Common myeloid progenitor, CD34-positive (primary cell): ENCODE measurements at regions of chr5 and their contacts with region 1.

Region 1: GRCh38 chr5:149442563-149443182 is 63.6 kb upstream of the IL17B start:
- DNase-seq: peak; percentile 44 to 66 (median 49)
- H3K4me3 ChIP-seq: no peak overlapping the region
- H3K27ac ChIP-seq: no peak overlapping the region
- H3K4me1 ChIP-seq: peaks cover 0 to 25% (median 13%) of the 10 kb centered on the region in 4 experiments
- H3K27me3 ChIP-seq: no peaks in the 10 kb centered on the region

Region 2: DNA sequence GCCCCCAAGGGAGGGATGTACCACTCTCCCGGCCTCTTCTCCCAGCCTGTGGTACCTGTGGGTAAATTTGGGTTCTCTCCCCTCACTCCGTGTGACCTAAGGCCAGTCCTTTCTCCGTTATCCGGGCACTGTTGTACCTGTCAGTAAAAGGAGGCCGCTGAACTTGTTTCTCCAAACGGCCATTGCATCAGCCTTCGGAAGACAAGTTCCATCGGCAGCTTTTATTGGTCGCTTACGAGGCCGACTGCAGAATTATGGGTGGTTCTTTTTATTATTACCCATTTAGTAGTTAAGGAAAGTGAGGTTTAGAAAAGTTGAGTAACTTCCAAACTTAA is 96.8 kb before region 1 on chr5:
- CTCF ChIA-PET with region 1: no interaction called
- POLR2A ChIA-PET with region 1: no interaction called
- DNase-seq: peak in 2 of 3 donors; percentile 31 to 40
- H3K4me3 ChIP-seq: peak overlapping the region; percentile 60 to 97 (median 83)
- H3K27ac ChIP-seq: peak overlapping the region in 1 of 2 experiments; percentile 69
- H3K4me1 ChIP-seq: peaks cover 9 to 35% (median 25%) of the 10 kb centered on the region in 4 experiments
- H3K27me3 ChIP-seq: no peaks in the 10 kb centered on the region

Region 3: DNA sequence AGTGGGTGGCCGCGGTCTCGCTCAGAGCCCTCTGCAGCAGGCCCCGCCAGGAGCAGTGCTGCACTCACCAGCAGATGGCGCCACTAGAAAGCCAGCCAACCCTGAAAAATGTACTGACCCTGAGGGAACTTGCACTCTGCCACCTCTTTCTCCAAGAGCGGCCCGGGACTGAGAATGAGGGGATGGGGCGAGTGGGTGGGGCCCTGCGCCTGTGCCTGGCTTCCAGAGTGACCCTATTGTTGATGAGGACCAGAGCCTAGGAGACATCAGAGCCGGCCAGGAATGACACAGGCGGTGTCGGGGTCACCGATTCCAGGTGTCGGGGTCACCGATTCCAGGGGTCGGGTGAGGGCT is 60.7 kb before region 1 on chr5:
- CTCF ChIA-PET with region 1: interaction called, 124 read pairs
- POLR2A ChIA-PET with region 1: no interaction called
- DNase-seq: peak; percentile 61 to 78 (median 72)
- H3K4me3 ChIP-seq: no peak overlapping the region
- H3K27ac ChIP-seq: no peak overlapping the region
- H3K4me1 ChIP-seq: peaks cover 0 to 8% (median 6%) of the 10 kb centered on the region in 4 experiments
- H3K27me3 ChIP-seq: no peaks in the 10 kb centered on the region

Region 4: GRCh38 chr5:149422366-149423048 is 20.2 kb before region 1 on chr5:
- CTCF ChIA-PET with region 1: interaction called, 17 read pairs
- POLR2A ChIA-PET with region 1: no interaction called
- DNase-seq: peak in 2 of 3 donors; percentile 51 to 62
- H3K4me3 ChIP-seq: peak overlapping the region in 5 of 7 experiments; percentile 5 to 67 (median 49)
- H3K27ac ChIP-seq: no peak overlapping the region
- H3K4me1 ChIP-seq: peaks cover 3 to 48% (median 28%) of the 10 kb centered on the region in 4 experiments
- H3K27me3 ChIP-seq: no peaks in the 10 kb centered on the region

Region 5: DNA sequence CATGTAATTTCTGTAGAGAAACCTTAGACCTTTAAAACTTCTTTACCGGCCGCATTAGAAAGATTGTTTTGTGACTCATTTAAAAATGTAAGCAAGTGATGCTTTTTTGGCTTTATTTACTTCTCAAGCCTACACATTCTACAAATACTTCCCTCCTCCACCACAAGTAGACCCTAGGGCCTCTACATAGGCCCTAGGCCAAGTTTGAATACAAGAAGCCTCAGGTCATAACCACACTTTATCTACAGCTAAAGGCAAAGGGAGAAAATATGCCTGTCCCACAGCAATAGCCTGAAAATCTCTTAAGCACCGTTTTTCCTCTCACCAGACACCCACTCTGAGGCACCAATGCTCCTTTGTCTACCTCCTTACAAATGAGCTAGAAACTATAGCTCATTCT is 54.7 kb after region 1 on chr5:
- CTCF ChIA-PET with region 1: interaction called, 10 read pairs
- POLR2A ChIA-PET with region 1: no interaction called
- DNase-seq: peak in 1 of 3 donors; percentile 28
- H3K4me3 ChIP-seq: no peak overlapping the region
- H3K27ac ChIP-seq: peak overlapping the region in 1 of 2 experiments; percentile 18
- H3K4me1 ChIP-seq: no peaks in the 10 kb centered on the region
- H3K27me3 ChIP-seq: no peaks in the 10 kb centered on the region

Region 6: DNA sequence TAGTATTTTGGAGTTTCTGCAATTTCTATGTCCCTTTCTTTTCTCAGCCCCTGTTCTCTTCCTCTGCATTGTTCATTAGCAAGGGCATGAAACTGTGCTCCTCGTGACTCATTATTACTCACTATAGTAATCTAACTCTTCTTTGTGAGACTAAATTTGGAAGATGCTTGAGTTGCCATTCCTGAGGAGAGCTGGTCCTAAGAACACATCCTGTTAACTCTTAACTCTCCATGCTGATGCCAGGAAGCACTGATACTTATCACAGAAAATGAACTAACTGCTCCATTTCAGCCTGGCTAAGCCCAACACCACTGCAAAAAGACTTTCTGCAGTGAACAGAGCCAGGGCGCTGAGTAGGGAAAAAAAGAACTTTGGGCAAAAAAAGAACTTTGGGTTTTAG is 119.2 kb after region 1 on chr5:
- CTCF ChIA-PET with region 1: interaction called, 24 read pairs
- POLR2A ChIA-PET with region 1: no interaction called
- DNase-seq: peak in 1 of 3 donors; percentile 18
- H3K4me3 ChIP-seq: no peak overlapping the region
- H3K27ac ChIP-seq: no peak overlapping the region
- H3K4me1 ChIP-seq: peaks cover 0 to 10% (median 0%) of the 10 kb centered on the region in 4 experiments
- H3K27me3 ChIP-seq: no peaks in the 10 kb centered on the region

Region 7: DNA sequence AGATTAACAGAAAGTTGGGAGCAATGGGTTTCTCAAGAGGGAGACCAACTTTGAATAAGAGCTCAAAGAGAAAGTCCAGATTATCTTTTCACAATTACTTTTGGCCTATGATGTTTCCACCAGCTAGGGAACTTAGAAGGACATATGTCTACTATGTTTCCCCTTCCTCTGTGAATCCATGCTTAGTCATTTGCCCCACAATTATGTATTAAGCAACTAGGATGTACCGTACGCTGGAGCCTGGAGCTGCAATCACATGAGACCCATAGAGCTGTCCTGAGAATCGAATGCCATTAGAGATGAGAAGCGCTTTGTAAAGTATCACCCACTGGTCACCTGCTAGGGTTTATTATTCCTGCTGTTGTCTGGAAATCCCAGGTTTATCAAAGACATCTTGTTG is 423.1 kb after region 1 on chr5:
- CTCF ChIA-PET with region 1: no interaction called
- POLR2A ChIA-PET with region 1: no interaction called
- DNase-seq: no peak
- H3K4me3 ChIP-seq: no peak overlapping the region
- H3K27ac ChIP-seq: no peak overlapping the region
- H3K4me1 ChIP-seq: peaks cover 0 to 11% (median 5%) of the 10 kb centered on the region in 4 experiments
- H3K27me3 ChIP-seq: no peaks in the 10 kb centered on the region

Region 8: DNA sequence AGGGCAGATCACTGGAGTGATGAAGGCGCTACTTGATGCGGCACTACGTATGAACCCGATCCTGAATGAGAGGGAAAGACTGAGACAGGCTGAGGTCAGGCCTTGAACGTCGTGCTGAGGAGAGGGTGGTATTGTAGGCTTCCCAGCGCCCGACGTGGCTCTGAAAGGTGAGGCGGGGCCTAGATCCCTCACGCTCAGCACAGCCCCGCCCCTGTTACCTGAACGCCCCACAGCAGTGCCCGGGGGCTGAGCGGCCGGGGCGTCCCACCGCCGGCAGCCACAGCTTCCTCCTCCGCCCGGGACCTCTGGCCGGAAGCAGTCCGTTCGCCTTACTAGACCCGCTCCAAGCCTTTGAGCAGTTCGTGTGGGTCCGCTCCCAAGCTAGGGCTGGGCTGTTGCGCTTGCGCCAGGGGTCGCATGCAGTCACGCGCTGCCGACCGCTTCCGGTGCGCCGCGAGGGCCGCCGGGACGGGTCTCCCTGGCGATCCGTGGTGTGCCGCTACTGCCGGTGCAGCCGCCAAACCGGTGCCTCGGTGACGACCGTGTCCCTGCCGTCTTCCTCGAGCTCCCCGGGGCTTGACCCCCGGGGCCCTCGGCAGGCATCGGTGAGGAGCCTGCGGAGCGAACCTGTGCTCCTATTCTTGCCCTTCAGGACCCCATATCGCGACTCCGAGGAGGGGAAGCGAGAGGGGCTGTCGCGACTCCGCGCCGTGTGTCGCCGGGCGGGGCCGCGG is 557.8 kb after region 1 on chr5 and contains the starts of genes HMGXB3 and TIGD6:
- CTCF ChIA-PET with region 1: no interaction called
- POLR2A ChIA-PET with region 1: no interaction called
- DNase-seq: peak; percentile 93 to 98 (median 96)
- H3K4me3 ChIP-seq: peak within 1 kb of the TSS; percentile 82 to 93 (median 89)
- H3K27ac ChIP-seq: peak within 1 kb of the TSS; percentile 61 to 87
- H3K4me1 ChIP-seq: peaks cover 11 to 33% (median 30%) of the 10 kb centered on the region in 4 experiments
- H3K27me3 ChIP-seq: no peaks in the 10 kb centered on the region